ENCODE measurements at regions of chr6 and their contacts with region 1.

Region 1: GRCh38 chr6:2931970-2932748 is 29.1 kb upstream of the SERPINB9 start:
- DNase-seq: peak; percentile 85 to 90
- H3K4me3 ChIP-seq: no peak overlapping the region
- H3K4me3 Mint-ChIP-seq: no peak overlapping the region
- H3K27ac Mint-ChIP-seq: no peak overlapping the region
- H3K4me1 ChIP-seq: no peaks in the 10 kb centered on the region
- H3K4me1 Mint-ChIP-seq: peaks cover 11% of the 10 kb centered on the region
- H3K27me3 ChIP-seq: no peaks in the 10 kb centered on the region
- H3K27me3 Mint-ChIP-seq: no peaks in the 10 kb centered on the region
- CTCF ChIP-seq: peak; percentile 91 to 97

Region 2: DNA sequence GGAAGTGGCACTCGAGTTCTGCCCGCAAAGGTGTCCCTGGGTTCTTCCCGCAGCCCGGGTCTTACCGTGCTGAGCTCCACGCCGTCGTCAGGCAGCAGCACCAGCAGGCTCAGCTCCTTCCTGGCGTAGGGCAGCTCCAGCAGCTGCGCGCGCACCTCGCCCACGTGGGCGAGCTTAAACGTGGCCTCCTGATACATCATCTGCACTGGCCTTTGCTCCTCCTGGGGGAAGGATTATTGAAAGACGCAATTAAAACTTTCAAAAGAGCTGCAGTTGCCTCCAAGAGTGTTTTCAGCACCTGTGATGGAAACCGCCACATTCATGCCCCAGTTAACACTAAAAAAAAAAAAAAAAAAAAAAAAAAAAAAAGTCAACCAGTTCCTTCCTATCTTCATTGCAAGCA is 40.4 kb before region 1 on chr6:
- CTCF ChIA-PET with region 1: interaction called, 12 read pairs
- POLR2A ChIA-PET with region 1: no interaction called
- intact Hi-C with region 1: loop called (anchors 5 kb)
- DNase-seq: peak; percentile 92 to 93
- H3K4me3 ChIP-seq: peak overlapping the region; percentile 71
- H3K4me3 Mint-ChIP-seq: peak overlapping the region; percentile 92
- H3K27ac Mint-ChIP-seq: peak overlapping the region; percentile 80
- H3K4me1 ChIP-seq: peaks cover 8% of the 10 kb centered on the region; the same call in 1 of the 2 replicates
- H3K4me1 Mint-ChIP-seq: peaks cover 10% of the 10 kb centered on the region
- H3K27me3 ChIP-seq: no peaks in the 10 kb centered on the region
- H3K27me3 Mint-ChIP-seq: no peaks in the 10 kb centered on the region
- CTCF ChIP-seq: no peak

Region 3: DNA sequence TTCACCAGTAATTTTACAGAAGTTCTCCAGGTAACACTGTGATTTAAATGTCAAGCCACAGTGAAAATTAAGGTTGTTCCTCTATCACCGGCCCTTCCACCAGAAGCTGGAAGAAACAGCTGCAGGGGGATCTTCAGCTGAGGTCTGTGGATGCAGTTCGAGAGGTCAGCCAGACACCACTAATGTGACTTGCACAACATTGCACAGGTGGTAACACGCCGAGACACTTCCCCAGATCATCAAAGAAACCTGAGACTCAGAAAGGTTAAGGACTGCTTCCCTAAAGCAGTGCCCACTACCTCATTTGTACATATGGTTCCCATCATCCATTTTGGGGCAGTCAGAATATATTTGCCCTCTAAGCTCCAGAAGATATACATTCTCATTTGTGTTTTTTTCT is 21.0 kb before region 1 on chr6:
- CTCF ChIA-PET with region 1: interaction called, 3 read pairs
- POLR2A ChIA-PET with region 1: no interaction called
- intact Hi-C with region 1: loop called (anchors 1 kb)
- DNase-seq: no peak
- H3K4me3 ChIP-seq: no peak overlapping the region
- H3K4me3 Mint-ChIP-seq: no peak overlapping the region
- H3K27ac Mint-ChIP-seq: no peak overlapping the region
- H3K4me1 ChIP-seq: peaks cover 22% of the 10 kb centered on the region
- H3K4me1 Mint-ChIP-seq: peaks cover 46% of the 10 kb centered on the region
- H3K27me3 ChIP-seq: no peaks in the 10 kb centered on the region
- H3K27me3 Mint-ChIP-seq: no peaks in the 10 kb centered on the region
- CTCF ChIP-seq: no peak